GM12878 (cell line): ENCODE measurements at regions of chr15 and their contacts with region 1.

Region 1: GRCh38 chr15:36961956-36962355 is 138.4 kb downstream of the MEIS2 start:
- DNase-seq: no peak
- ATAC-seq: no peak
- H3K4me3 ChIP-seq: no peak overlapping the region
- H3K27ac ChIP-seq: no peak overlapping the region
- H3K4me1 ChIP-seq: no peaks in the 10 kb centered on the region
- H3K27me3 ChIP-seq: no peaks in the 10 kb centered on the region
- CTCF ChIP-seq: no peak
- EP300 ChIP-seq: no peak
- POLR2A ChIP-seq: no peak
- RAD21 ChIP-seq: no peak

Region 2: GRCh38 chr15:36933255-36933990 is 28.5 kb before region 1 on chr15:
- CTCF ChIA-PET with region 1: no interaction called
- POLR2A ChIA-PET with region 1: no interaction called
- RAD21 ChIA-PET with region 1: interaction called, 11 read pairs
- SMC1A ChIA-PET with region 1: interaction called, 7 read pairs
- in situ Hi-C with region 1: no loop called
- intact Hi-C with region 1: no loop called
- DNase-seq: no peak
- ATAC-seq: peak; percentile 67
- H3K4me3 ChIP-seq: no peak overlapping the region
- H3K27ac ChIP-seq: no peak overlapping the region
- H3K4me1 ChIP-seq: no peaks in the 10 kb centered on the region
- H3K27me3 ChIP-seq: no peaks in the 10 kb centered on the region
- CTCF ChIP-seq: no peak
- EP300 ChIP-seq: no peak
- POLR2A ChIP-seq: no peak
- RAD21 ChIP-seq: no peak

Region 3: GRCh38 chr15:36947035-36947719 is 14.8 kb before region 1 on chr15:
- CTCF ChIA-PET with region 1: interaction called, 6 read pairs
- POLR2A ChIA-PET with region 1: interaction called, 4 read pairs
- RAD21 ChIA-PET with region 1: interaction called, 14 read pairs
- SMC1A ChIA-PET with region 1: interaction called, 20 read pairs
- in situ Hi-C with region 1: no loop called
- intact Hi-C with region 1: no loop called
- DNase-seq: no peak
- ATAC-seq: no peak
- H3K4me3 ChIP-seq: no peak overlapping the region
- H3K27ac ChIP-seq: no peak overlapping the region
- H3K4me1 ChIP-seq: no peaks in the 10 kb centered on the region
- H3K27me3 ChIP-seq: no peaks in the 10 kb centered on the region
- CTCF ChIP-seq: no peak
- EP300 ChIP-seq: no peak
- POLR2A ChIP-seq: no peak
- RAD21 ChIP-seq: no peak